ENCODE measurements at regions of chr10 and their contacts with region 1.

Region 1: DNA sequence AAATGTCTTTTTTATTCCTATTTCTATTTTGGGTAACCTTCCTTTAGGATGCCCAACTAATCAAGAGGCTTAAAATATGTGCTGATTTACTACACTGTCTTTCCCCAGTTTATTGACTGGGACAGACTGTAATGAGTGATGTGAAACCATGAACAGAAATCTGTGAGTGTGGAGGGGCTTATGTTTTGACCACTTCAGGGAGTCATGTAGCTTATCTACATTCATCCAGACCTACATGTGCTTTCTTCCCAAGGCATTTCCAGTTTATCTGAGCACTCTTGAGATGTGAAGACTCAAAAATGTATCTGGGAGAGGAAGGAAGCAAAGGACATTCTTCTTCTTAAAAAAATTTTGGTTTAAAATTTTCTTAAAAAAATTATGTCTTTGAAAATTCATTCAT is 45.2 kb downstream of the STAM start:
- DNase-seq: no peak
- H3K4me3 ChIP-seq: no peak overlapping the region
- H3K27ac ChIP-seq: no peak overlapping the region
- H3K4me1 ChIP-seq: peaks cover 3 to 16% (median 3%) of the 10 kb centered on the region in 4 experiments
- H3K27me3 ChIP-seq: no peaks in the 10 kb centered on the region

Region 2: GRCh38 chr10:17673456-17674061 is 15.6 kb before region 1 on chr10:
- CTCF ChIA-PET with region 1: interaction called, 11 read pairs
- POLR2A ChIA-PET with region 1: interaction called, 4 read pairs
- DNase-seq: no peak
- H3K4me3 ChIP-seq: no peak overlapping the region
- H3K27ac ChIP-seq: no peak overlapping the region
- H3K4me1 ChIP-seq: peaks cover 2 to 34% (median 9%) of the 10 kb centered on the region in 4 experiments
- H3K27me3 ChIP-seq: no peaks in the 10 kb centered on the region

Region 3: DNA sequence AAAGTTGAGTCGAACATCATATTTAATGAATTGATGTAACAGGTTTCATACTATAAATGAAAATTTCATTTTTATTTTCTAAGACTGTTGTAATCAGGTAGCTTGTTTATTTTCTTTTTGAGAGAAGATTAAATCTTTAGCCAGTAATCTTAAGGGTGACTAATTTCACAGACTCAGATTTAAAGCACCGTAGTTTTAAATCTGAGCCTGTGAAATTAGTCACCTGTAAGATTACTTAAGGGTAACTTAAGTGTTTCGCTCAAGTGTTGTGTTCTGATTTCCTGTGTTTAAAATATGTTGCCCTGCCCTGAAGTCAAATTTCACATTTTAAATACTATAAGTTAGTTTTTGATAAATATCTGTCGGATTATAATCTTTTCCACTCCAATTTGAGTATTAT is 27.0 kb after region 1 on chr10:
- CTCF ChIA-PET with region 1: no interaction called
- POLR2A ChIA-PET with region 1: no interaction called
- DNase-seq: no peak
- H3K4me3 ChIP-seq: no peak overlapping the region
- H3K27ac ChIP-seq: no peak overlapping the region
- H3K4me1 ChIP-seq: no peaks in the 10 kb centered on the region
- H3K27me3 ChIP-seq: no peaks in the 10 kb centered on the region